ENCODE measurements at regions of chr13 and their contacts with region 1.

Region 1: DNA sequence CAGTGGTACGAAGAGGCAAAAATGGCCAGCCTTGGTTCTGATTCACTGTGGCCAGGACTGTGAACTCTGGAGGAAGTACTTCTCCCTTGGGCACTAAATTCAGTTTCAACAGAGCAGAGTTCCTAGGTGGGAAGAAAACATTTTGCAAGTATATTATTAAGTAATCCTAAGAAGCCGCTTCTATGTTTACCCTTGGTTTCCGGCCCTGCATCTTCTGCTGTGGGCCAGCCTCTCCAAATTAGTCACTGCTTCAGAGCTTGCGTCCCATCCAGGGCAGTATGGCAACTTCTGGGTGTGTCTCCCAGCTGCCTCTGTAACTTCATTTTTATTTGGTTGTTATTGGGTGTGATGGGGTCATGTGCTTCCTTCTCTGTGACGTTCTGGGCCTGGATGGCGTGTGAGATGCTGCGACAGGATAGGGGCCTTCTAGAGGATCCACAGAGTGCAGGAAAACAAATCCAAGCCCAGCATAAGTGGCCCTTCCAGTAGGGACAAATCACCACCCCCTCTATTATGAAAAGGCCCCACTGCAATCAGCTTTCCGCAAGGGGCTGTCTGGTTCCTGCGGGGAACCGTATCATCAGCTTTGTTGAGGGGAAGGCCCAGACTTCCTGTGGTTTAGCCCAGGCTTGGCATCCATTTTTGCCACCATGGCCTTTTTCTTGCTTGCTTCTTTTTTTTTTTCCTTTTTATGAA is 55.1 kb upstream of the C1QTNF9 start:
- DNase-seq: peak; percentile 76
- ATAC-seq: peak; percentile 61
- H3K4me3 Mint-ChIP-seq: peak overlapping the region; percentile 95
- H3K27ac Mint-ChIP-seq: peak overlapping the region; percentile 96
- H3K4me1 Mint-ChIP-seq: peaks cover 88% of the 10 kb centered on the region
- H3K27me3 Mint-ChIP-seq: no peaks in the 10 kb centered on the region

Region 2: DNA sequence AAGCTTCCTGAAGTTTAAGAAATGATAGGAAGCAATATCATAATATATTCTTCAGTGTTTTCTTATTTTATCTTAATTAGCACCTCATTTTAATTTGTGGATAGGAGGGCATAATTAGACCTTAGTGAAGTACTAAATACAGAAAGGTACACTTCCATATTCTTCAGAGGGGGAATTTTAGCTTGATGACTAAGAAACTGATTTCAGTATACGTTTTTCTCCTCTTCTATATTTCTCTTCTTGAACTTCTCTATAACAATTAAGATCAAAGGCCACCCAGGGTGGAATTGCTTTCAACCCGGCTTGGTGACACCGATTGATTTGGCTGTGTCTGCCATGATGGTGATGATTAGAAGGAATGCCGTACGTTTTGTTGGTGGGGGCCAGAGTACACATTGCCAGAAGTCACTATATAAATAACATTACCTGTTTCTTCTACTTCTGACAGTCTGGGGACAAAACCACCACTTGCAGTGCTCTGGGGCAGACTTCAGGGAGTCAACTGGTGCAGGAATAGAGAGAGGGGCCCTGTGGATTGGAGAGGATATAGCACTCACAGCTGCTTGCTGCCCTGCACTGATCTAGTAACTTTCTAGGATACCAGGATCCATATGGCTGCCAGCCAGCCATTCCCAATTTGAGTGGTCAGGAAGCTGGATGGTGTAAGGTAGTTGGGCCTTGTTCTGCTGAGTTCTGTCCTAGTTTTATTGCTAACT is 19.9 kb before region 1 on chr13:
- CTCF ChIA-PET with region 1: interaction called, 8 read pairs
- POLR2A ChIA-PET with region 1: interaction called, 4 read pairs
- intact Hi-C with region 1: loop called (anchors 1 to 2 kb)
- DNase-seq: no peak
- ATAC-seq: no peak
- H3K4me3 Mint-ChIP-seq: no peak overlapping the region
- H3K27ac Mint-ChIP-seq: peak overlapping the region; percentile 72
- H3K4me1 Mint-ChIP-seq: peaks cover 34% of the 10 kb centered on the region
- H3K27me3 Mint-ChIP-seq: no peaks in the 10 kb centered on the region

Region 3: DNA sequence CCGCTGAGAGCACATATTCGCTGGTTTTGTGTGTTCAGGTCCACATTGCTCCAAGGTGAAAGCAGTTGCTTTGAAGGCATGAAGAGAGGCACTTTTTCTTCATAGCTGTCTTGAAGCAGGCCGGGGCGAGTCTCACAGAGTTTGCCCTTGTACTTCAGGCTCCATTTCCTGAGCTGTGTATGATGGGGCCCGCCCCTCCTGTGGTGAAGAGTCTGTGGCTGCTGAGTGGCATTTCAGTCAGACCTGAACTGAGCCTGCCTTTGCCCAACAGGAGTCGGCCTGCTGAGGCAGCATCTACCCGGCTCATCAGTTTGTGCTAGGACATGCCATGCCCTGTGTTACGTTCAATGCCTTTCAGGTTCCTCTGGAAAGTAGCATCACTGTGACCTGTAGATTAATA is 10.7 kb after region 1 on chr13:
- CTCF ChIA-PET with region 1: interaction called, 15 read pairs
- POLR2A ChIA-PET with region 1: interaction called, 41 read pairs
- intact Hi-C with region 1: loop called (anchors 1 kb)
- DNase-seq: peak; percentile 92
- ATAC-seq: peak; percentile 92
- H3K4me3 Mint-ChIP-seq: peak overlapping the region; percentile 66
- H3K27ac Mint-ChIP-seq: peak overlapping the region; percentile 95
- H3K4me1 Mint-ChIP-seq: peaks cover 92% of the 10 kb centered on the region
- H3K27me3 Mint-ChIP-seq: no peaks in the 10 kb centered on the region

Region 4: GRCh38 chr13:24270639-24271141 is 16.4 kb after region 1 on chr13:
- CTCF ChIA-PET with region 1: interaction called, 10 read pairs
- POLR2A ChIA-PET with region 1: interaction called, 41 read pairs
- intact Hi-C with region 1: loop called (anchors 1 kb)
- DNase-seq: peak; percentile 80
- ATAC-seq: peak; percentile 37
- H3K4me3 Mint-ChIP-seq: peak overlapping the region; percentile 87
- H3K27ac Mint-ChIP-seq: peak overlapping the region; percentile 97
- H3K4me1 Mint-ChIP-seq: peaks cover 85% of the 10 kb centered on the region
- H3K27me3 Mint-ChIP-seq: no peaks in the 10 kb centered on the region